AG04450 (cell line): ENCODE measurements at regions of chr14 and their contacts with region 1.

Region 1: DNA sequence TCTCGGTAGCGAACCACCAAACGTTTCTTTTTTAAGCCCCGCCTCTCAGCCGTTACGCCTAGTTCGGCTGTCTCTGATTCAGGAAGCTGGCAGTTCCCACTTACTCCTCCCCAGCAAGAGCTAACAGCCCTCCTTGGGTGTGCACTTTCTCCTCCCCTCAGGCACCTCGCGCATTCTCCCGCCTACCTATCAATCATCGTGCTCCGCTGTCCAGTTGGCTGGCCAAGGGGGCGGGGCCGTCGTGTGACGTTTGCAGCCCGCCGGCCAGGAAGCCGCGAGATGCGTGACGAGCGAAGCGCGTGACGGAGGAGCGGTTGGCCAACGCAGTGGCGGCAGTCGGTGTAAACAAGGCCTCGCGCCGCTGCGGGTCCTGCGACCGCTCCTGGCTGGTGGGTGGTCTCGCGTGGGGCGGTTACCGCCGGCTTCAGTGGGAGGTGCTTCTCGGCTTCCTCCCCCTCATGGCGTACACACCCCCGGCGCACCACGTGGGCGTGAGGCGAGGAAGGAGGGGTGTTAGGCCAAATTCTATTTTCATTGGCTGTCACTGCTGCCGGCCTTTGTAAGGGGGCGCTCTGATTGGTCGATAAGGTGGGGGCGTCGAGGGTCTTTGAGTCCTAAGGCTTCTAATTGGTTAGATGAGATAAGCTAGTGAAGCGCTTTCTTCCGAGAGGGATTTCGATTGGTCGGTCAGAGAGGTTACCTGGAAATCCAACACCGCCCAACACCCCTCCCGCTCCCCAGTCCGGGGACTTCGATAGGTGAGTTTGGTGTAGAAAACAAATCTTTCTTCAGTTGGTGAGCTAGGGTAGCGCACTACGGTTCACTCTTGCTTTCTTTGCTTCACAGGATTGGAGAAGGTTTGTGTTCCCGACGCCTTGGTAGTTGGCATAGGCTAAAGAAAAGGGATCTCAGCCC is at the starts of genes DCAF11 and NRL:
- DNase-seq: peak; percentile 99
- H3K4me3 ChIP-seq: peak within 1 kb of the TSS; percentile 92
- H3K27ac ChIP-seq: peak within 1 kb of the TSS; percentile 99
- H3K27me3 ChIP-seq: no peaks in the 10 kb centered on the region
- CTCF ChIP-seq: no peak
- polyA plus RNA-seq, gene DCAF11: 29.7 and 32.5 TPM in 2 replicates
- polyA plus RNA-seq, gene NRL: 0.41 and 0.46 TPM in 2 replicates

Region 2: GRCh38 chr14:23766737-23767401 is 347.9 kb before region 1 on chr14:
- CTCF ChIA-PET with region 1: no interaction called
- POLR2A ChIA-PET with region 1: no interaction called
- DNase-seq: no peak
- H3K4me3 ChIP-seq: no peak overlapping the region
- H3K27ac ChIP-seq: no peak overlapping the region
- H3K27me3 ChIP-seq: no peaks in the 10 kb centered on the region
- CTCF ChIP-seq: no peak

Region 3: GRCh38 chr14:24058260-24058950 is 56.4 kb before region 1 on chr14:
- CTCF ChIA-PET with region 1: interaction called, 193 read pairs
- POLR2A ChIA-PET with region 1: no interaction called
- DNase-seq: peak; percentile 59
- H3K4me3 ChIP-seq: no peak overlapping the region
- H3K27ac ChIP-seq: no peak overlapping the region
- H3K27me3 ChIP-seq: peaks cover 36% of the 10 kb centered on the region
- CTCF ChIP-seq: peak; percentile 93

Region 4: GRCh38 chr14:24135834-24136542 is 21.2 kb after region 1 on chr14 and contains the start of gene PSME1:
- CTCF ChIA-PET with region 1: interaction called, 4 read pairs
- POLR2A ChIA-PET with region 1: interaction called, 12 read pairs
- DNase-seq: peak; percentile 59
- H3K4me3 ChIP-seq: peak within 1 kb of the TSS; percentile 80
- H3K27ac ChIP-seq: no peak within 1 kb of the TSS
- H3K27me3 ChIP-seq: no peaks in the 10 kb centered on the region
- CTCF ChIP-seq: no peak
- polyA plus RNA-seq, gene PSME1: 80.0 and 94.9 TPM in 2 replicates

Region 5: GRCh38 chr14:24141097-24141880 is 26.5 kb after region 1 on chr14 and contains the start of gene EMC9:
- CTCF ChIA-PET with region 1: interaction called, 9 read pairs
- POLR2A ChIA-PET with region 1: interaction called, 17 read pairs
- DNase-seq: peak; percentile 97
- H3K4me3 ChIP-seq: peak within 1 kb of the TSS; percentile 95
- H3K27ac ChIP-seq: peak within 1 kb of the TSS; percentile 81
- H3K27me3 ChIP-seq: no peaks in the 10 kb centered on the region
- CTCF ChIP-seq: peak; percentile 48
- polyA plus RNA-seq, gene EMC9: 4.4 and 6.3 TPM in 2 replicates

Region 6: DNA sequence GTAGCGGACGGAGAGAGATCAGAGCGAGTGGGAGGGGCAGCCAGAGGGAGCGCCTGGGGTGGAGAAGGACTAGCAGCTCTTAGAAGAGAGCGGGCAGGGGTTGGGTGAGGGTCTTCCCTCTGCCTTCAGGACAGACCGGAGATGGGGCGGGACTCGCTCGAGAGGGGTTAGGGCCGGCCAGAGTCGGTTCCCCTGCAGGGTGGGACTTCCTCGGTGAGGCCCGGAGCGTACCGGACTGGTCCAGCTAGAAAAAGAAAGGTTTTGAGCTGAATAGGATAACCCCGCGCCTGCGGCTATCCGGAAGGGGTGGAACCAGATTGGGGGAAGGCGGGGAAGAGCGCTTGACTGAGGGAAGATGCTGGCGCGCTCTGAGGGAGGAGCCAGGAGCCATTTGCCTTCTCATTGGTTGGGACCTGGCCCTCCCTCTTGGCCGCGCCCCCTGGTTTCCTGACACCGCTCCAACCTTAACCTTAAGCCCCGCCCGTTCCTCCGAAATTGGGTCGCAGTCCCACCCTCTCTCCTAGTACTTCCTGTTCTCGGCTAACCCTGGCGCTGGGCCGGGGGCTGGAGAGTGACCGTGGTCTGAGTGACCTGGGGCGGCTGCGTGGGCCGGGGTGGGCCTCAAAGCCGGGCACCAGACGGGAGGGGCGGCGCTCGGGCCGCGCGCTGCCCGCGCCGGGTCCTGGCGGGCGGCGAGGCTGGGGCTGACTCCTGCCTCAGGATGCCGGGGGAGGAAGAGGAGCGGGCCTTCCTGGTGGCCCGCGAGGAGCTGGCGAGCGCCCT is 32.4 kb after region 1 on chr14 and contains the start of gene RNF31:
- CTCF ChIA-PET with region 1: interaction called, 9 read pairs
- POLR2A ChIA-PET with region 1: interaction called, 17 read pairs
- DNase-seq: peak; percentile 95
- H3K4me3 ChIP-seq: peak within 1 kb of the TSS; percentile 72
- H3K27ac ChIP-seq: peak within 1 kb of the TSS; percentile 90
- H3K27me3 ChIP-seq: no peaks in the 10 kb centered on the region
- CTCF ChIP-seq: no peak
- polyA plus RNA-seq, gene RNF31: 7.4 and 14.4 TPM in 2 replicates

Region 7: GRCh38 chr14:24167469-24168114 is 52.8 kb after region 1 on chr14:
- CTCF ChIA-PET with region 1: no interaction called
- POLR2A ChIA-PET with region 1: no interaction called
- DNase-seq: no peak
- H3K4me3 ChIP-seq: no peak overlapping the region
- H3K27ac ChIP-seq: no peak overlapping the region
- H3K27me3 ChIP-seq: no peaks in the 10 kb centered on the region
- CTCF ChIP-seq: no peak

Region 8: DNA sequence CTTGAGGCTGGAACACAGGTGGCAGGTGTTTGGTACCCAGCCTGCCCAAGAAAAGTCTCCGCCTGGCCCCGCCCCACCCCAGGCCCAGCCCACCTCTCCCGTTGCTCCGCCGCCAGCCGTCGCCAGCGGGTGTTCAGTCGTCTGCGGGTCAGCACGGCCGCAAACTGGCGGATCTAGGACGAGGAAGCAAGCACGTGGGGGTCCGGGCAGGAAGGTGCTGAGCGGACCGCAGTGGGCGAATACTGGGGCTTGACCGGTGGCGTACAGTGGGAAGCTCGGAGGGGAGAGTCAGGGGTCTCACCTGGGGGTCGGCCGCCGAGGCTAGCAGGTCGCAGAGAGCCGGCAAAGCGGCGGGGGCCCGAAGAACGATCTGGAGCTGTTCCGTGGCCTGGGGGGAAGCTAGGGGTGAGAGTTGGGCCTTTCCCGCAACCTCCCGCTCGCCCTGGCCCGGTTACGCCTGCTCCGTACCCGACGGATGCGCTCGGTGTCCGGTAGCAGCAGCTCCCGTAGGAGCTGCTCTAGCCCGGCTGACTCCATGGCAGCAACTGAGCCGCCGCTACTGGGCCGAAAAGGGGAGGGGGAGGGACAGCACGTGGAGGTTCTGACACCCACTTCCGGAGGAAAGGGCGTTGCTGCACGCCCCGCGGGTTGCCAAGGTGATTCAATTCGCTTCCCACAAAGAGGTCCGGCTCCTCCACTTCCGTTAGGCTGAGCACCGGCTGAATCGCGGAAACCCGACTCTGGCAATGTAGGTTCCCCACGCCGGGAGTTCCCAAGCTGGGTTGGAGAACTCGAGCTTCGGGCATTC is 73.7 kb after region 1 on chr14 and contains the start of gene IPO4:
- CTCF ChIA-PET with region 1: no interaction called
- POLR2A ChIA-PET with region 1: no interaction called
- DNase-seq: peak; percentile 94
- H3K4me3 ChIP-seq: peak within 1 kb of the TSS; percentile 85
- H3K27ac ChIP-seq: peak within 1 kb of the TSS; percentile 77
- H3K27me3 ChIP-seq: no peaks in the 10 kb centered on the region
- CTCF ChIP-seq: no peak
- polyA plus RNA-seq, gene IPO4: 15.2 and 20.9 TPM in 2 replicates

Region 9: DNA sequence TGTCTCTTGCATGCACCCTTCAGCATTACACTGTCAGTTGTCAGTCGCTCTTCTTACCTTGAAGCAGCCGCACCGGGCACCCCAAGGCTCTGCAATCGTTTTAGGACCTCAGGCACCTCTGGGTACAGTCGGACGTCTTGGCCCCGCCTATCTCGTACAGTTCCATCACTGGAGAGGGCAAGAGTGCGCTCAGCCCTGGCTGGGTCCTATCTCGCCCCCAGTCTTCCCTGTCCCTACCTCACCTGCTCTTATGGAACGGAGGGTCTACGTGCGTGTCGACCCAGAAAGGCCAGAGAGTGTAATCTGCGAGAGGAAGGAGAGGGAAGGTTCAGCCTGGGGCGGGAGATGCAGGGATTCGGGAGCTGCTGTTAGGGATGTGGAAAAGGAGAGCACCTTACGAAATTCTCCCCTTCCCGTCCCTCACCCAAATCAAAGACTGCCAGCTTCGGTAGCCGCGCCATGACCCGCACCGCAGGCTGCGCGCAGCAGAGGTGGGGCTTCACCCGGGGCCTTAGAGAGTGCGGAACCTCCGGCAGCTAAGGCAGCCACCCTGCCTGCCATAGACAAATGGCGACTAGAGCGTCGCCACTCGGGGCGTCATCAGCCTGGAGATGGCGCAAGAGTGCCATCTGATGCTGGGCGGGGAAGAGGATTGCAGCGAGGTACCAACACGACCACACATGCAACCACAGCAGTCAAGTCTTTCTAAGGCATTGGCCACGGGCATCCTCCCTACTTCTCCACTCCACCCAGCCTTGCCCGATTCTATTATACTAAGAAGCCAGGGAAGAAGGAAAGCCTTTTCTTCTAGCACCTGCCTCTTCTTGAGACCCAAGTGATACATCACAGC is 100.9 kb after region 1 on chr14 and contains the start of gene MDP1:
- CTCF ChIA-PET with region 1: no interaction called
- POLR2A ChIA-PET with region 1: interaction called, 10 read pairs
- DNase-seq: peak; percentile 43
- H3K4me3 ChIP-seq: peak within 1 kb of the TSS; percentile 79
- H3K27ac ChIP-seq: peak within 1 kb of the TSS; percentile 84
- H3K27me3 ChIP-seq: no peaks in the 10 kb centered on the region
- CTCF ChIP-seq: peak; percentile 41
- polyA plus RNA-seq, gene MDP1: 14.9 and 16.1 TPM in 2 replicates

Region 10: GRCh38 chr14:24329736-24330135 is 214.9 kb after region 1 on chr14:
- CTCF ChIA-PET with region 1: no interaction called
- POLR2A ChIA-PET with region 1: no interaction called
- DNase-seq: no peak
- H3K4me3 ChIP-seq: no peak overlapping the region
- H3K27ac ChIP-seq: no peak overlapping the region
- H3K27me3 ChIP-seq: peaks cover 34% of the 10 kb centered on the region
- CTCF ChIP-seq: no peak